Caco-2 (cell line): ENCODE measurements at regions of chr15 and their contacts with region 1.

Region 1: DNA sequence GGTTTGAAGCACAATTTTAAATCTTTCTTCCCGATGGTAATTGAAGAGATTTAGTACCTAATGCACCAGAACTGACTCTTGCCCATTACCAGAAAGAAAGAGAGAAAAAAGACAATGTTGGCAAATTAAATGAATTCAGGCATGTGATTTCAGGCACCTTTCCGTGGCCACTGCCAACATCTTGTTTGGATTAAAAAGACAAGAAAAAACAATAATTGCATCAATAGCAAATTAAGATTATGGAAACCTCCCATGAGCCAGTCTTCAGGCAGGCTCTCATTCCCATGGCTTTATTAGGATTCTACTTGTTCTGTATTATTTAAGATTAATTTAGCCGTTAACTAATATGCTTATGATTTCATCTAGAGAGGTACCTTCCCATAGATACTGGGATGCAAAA is 193.0 kb downstream of the GREM1 start:
- DNase-seq: no peak
- H3K4me3 ChIP-seq: no peak overlapping the region
- H3K4me3 Mint-ChIP-seq: no peak overlapping the region
- H3K27ac Mint-ChIP-seq: no peak overlapping the region
- H3K4me1 ChIP-seq: no peaks in the 10 kb centered on the region
- H3K4me1 Mint-ChIP-seq: no peaks in the 10 kb centered on the region
- H3K27me3 ChIP-seq: no peaks in the 10 kb centered on the region; the same call in 1 of the 2 replicates
- H3K27me3 Mint-ChIP-seq: peaks cover 16% of the 10 kb centered on the region
- CTCF ChIP-seq: no peak

Region 2: GRCh38 chr15:32882955-32883354 is 27.9 kb before region 1 on chr15:
- CTCF ChIA-PET with region 1: no interaction called
- POLR2A ChIA-PET with region 1: no interaction called
- intact Hi-C with region 1: loop called (anchors 2 kb)
- DNase-seq: no peak
- H3K4me3 ChIP-seq: no peak overlapping the region
- H3K4me3 Mint-ChIP-seq: no peak overlapping the region
- H3K27ac Mint-ChIP-seq: no peak overlapping the region
- H3K4me1 ChIP-seq: no peaks in the 10 kb centered on the region
- H3K4me1 Mint-ChIP-seq: no peaks in the 10 kb centered on the region
- H3K27me3 ChIP-seq: no peaks in the 10 kb centered on the region
- H3K27me3 Mint-ChIP-seq: peaks cover 4% of the 10 kb centered on the region
- CTCF ChIP-seq: no peak